ENCODE measurements at regions of chr1 and their contacts with region 1.

Region 1: DNA sequence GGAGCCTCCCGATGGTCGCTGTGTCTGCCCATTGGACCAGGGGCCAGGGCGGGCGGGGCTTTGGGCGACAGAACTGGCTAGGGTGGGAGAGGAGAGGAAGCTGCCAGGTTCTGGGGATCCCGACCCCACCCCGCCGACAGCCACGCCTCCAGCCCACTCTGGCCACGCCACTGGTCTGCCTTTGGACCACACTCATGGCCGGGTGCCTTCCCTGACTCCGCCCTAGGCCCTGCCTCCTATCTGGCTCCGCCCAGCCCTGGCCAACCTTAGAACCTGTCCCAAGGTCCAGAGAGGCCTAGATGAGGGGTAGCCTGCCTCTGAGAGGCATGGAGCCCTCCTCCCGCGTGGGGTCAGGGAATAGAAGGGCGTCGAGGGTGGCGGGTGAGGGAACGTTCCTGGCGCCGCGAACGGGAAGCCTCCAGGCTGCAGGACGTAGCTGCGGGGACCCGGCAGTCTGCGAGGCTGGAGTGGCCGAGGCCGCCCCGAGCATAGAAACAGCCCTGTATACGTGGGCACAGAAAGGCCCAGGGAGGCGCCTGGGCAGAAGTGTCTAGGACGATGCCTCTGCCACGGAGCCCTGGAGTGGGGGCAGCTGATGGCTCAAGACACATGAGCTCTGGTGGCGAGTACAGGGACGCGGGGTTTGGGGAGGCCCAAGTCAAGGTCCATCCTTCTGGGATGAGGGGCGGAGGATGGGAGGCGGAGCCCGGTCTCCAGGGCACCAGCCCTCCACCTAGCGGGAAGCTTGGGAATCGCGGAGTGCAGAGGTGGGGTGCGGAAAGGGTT is 11.5 kb upstream of the COL16A1 start:
- DNase-seq: peak; percentile 87 to 93
- ATAC-seq: peak; percentile 87 to 96
- H3K4me3 ChIP-seq: peak overlapping the region; percentile 49
- H3K27ac ChIP-seq: peak overlapping the region; percentile 91 to 94
- H3K4me1 ChIP-seq: peaks cover 53% of the 10 kb centered on the region
- CTCF ChIP-seq: peak; percentile 57
- EP300 ChIP-seq: no peak
- POLR2A ChIP-seq: peak; percentile 73
- RAD21 ChIP-seq: peak; percentile 43 to 56

Region 2: GRCh38 chr1:31422505-31423319 is 292.6 kb before region 1 on chr1:
- CTCF ChIA-PET with region 1: no interaction called
- POLR2A ChIA-PET with region 1: no interaction called
- DNase-seq: peak; percentile 71 to 75
- ATAC-seq: peak; percentile 92 to 93
- H3K4me3 ChIP-seq: no peak overlapping the region
- H3K27ac ChIP-seq: peak overlapping the region; percentile 63 to 69
- H3K4me1 ChIP-seq: peaks cover 29% of the 10 kb centered on the region
- CTCF ChIP-seq: peak; percentile 68
- EP300 ChIP-seq: no peak
- POLR2A ChIP-seq: no peak
- RAD21 ChIP-seq: peak; percentile 83 to 85

Region 3: DNA sequence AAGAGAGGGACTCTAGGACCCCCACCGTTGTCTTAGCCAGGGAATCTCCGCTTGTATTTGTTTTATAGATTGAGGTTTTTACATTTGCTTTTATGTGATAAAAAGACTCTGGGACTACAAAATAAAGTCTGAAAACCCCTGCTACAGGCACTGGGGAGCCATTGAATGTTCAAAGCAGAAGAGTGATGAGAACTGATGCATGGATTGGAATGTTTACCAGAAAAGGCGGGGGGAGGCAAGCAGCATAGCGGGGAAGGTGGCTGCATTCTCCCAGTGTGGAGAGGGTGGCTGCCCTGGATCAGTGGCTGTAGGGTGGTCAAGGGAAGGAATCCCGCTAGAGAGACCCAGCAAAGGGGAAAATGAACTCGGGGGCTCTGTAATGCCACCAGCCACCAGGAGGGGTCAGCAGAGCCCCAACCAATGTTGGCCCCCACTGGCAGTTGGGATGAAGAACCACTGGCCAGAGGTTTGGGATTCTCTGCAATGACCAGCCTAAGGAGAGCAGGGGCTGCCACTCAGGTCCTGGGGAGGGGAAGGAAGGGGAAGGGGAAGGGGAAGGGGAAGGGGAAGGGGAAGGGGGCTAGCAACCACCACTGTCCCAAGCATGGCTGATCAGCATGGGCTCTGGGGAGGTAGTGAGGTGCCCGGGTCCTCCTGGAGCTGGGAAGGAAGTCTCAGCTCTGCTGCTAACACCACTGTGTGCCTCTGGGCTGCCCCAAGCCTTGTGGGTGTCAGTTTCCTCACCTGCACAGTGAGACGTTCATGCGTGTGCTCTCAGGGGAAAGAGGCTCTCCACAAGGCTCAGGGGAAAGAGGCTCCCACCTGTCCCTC is 51.4 kb before region 1 on chr1:
- CTCF ChIA-PET with region 1: interaction called, 183 read pairs
- POLR2A ChIA-PET with region 1: interaction called, 25 read pairs
- DNase-seq: peak; percentile 30 to 74
- ATAC-seq: peak; percentile 49 to 66; a peak in 5 of 6 replicates
- H3K4me3 ChIP-seq: no peak overlapping the region
- H3K27ac ChIP-seq: peak overlapping the region in 1 of 2 experiments; percentile 91; a peak in 3 of 6 replicates
- H3K4me1 ChIP-seq: peaks cover 33% of the 10 kb centered on the region
- CTCF ChIP-seq: peak; percentile 76
- EP300 ChIP-seq: no peak
- POLR2A ChIP-seq: no peak
- RAD21 ChIP-seq: peak; percentile 95 to 96

Region 4: DNA sequence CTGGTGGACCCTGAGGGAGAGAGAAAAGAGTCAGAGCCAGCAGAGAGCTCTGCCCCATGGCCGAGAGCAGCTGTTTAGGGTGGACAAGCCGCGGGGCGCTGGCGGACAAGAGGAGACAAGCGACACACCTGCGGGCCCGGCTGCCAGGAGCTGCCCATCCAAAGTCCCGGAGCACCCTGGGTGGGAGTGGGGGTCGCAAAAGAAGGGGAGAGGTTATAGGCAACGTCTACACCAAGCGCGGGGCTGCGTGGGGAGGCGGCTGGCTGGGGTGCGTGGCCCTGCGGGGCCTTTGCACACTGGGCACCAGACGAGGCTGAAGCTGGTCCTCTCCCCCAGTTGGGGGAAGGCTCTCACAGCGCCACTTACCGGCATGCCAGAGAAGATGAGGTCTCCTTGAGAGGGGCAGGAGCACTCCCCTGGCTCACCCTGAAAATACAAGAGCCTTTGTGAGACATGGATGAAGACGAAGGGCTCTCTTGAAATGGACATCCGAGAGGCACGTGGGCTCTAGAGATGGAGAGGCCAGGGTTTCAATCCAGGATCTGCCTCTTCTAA is 35.5 kb before region 1 on chr1:
- CTCF ChIA-PET with region 1: interaction called, 14 read pairs
- POLR2A ChIA-PET with region 1: no interaction called
- DNase-seq: no peak
- ATAC-seq: peak in 1 of 2 experiments; percentile 34; a peak in 2 of 6 replicates
- H3K4me3 ChIP-seq: no peak overlapping the region
- H3K27ac ChIP-seq: no peak overlapping the region
- H3K4me1 ChIP-seq: no peaks in the 10 kb centered on the region
- CTCF ChIP-seq: no peak
- EP300 ChIP-seq: no peak
- POLR2A ChIP-seq: no peak
- RAD21 ChIP-seq: no peak

Region 5: DNA sequence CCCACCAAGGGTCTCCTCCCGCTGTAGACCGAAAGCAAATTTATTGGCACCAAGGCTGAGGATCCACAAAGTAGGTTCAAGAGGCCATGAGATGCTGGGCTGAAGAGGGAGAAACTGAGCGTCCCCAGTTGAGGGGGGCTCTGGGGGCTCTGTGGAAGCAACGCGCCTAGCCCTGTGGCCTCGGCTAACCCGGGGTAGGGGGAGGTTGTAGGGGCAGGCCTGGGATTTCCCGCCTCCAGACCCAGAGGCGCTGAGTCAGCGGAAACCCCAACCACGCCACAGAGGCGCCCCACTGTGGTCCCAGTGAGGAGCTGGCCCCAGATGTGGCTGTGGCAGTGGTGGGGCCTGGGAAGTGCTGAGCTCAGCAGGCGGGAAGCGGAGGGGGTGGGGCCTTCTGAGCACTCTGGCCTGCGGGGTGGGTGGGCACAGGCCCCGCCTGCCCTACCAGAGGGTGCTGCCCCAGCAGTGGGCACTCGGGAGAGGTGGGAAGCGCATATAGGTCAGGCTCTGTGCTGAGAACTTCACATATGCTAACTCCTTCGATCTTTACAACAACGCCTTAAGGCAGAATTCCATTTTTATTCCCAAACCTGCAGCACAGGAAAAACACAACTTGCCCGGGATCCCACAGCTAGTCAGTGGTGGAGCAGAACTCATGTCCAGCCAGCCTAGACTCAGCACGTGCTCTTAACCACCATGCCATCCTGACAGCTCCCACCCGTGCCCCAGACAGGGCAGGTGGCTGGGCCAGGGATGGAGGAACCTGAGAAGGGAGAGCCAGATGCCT is 10.0 kb before region 1 on chr1:
- CTCF ChIA-PET with region 1: interaction called, 112 read pairs
- POLR2A ChIA-PET with region 1: interaction called, 30 read pairs
- DNase-seq: peak; percentile 19 to 41
- ATAC-seq: peak in 1 of 2 experiments; percentile 22; a peak in 3 of 6 replicates
- H3K4me3 ChIP-seq: no peak overlapping the region
- H3K27ac ChIP-seq: peak overlapping the region; percentile 56 to 95; a peak in 4 of 6 replicates
- H3K4me1 ChIP-seq: peaks cover 55% of the 10 kb centered on the region
- CTCF ChIP-seq: no peak; the same call in 2 of the 3 replicates
- EP300 ChIP-seq: no peak
- POLR2A ChIP-seq: no peak
- RAD21 ChIP-seq: peak; percentile 62 to 64

Region 6: DNA sequence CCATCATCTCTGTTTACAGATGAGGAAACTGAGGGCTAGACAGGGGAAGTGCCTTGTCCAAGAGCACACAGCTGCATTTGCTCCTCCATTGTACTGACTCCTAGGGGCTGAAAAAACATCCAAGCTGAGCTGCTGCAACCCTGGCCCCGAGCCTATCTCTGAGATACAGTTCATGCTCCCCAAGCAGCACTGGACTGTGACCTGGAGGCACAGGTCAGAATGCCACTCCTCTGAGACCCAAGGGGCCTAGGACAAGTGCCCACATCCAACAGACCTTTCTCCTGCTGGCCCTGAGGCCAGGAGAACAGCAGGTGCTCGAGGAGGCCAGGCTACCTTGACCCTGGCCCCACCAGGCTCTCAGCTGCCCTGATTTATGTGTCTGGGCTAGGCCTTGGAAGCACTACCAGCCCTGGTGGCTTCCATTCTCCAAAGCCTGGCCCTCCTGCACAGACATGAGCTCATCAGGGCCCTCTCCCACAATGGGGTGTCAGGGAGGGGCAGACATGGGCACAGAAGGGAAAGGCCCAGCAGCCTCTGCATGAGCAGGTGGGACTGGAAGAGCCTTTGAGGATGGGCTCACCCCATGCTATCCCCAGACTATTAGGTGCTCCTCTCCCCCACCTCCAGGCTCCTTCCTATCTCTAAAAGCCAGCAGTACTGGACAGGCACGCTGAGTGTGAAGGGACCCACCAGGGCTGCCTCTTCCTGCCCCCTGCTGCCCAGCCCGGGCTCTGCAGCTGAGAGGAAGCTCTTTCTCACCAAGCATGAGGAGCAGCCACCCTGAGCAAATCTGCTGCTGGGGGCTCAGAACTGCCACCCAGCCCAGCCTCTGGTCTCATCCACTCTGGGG is 30.0 kb after region 1 on chr1:
- CTCF ChIA-PET with region 1: interaction called, 47 read pairs
- POLR2A ChIA-PET with region 1: interaction called, 8 read pairs
- DNase-seq: peak; percentile 54 to 77
- ATAC-seq: peak; percentile 85 to 95; a peak in 5 of 6 replicates
- H3K4me3 ChIP-seq: no peak overlapping the region
- H3K27ac ChIP-seq: peak overlapping the region in 1 of 2 experiments; percentile 21; a peak in 1 of 6 replicates
- H3K4me1 ChIP-seq: peaks cover 5% of the 10 kb centered on the region; the same call in 1 of the 3 replicates
- CTCF ChIP-seq: peak; percentile 42; the same call in 2 of the 3 replicates
- EP300 ChIP-seq: no peak
- POLR2A ChIP-seq: no peak
- RAD21 ChIP-seq: peak; percentile 68 to 73

Region 7: GRCh38 chr1:31762726-31763670 is 47.7 kb after region 1 on chr1:
- CTCF ChIA-PET with region 1: interaction called, 17 read pairs
- POLR2A ChIA-PET with region 1: interaction called, 3 read pairs
- DNase-seq: peak; percentile 70 to 76
- ATAC-seq: peak; percentile 62 to 76
- H3K4me3 ChIP-seq: peak overlapping the region; percentile 67
- H3K27ac ChIP-seq: peak overlapping the region; percentile 76 to 98
- H3K4me1 ChIP-seq: peaks cover 40% of the 10 kb centered on the region
- CTCF ChIP-seq: peak; percentile 64
- EP300 ChIP-seq: no peak
- POLR2A ChIP-seq: no peak
- RAD21 ChIP-seq: peak; percentile 43 to 64